ENCODE measurements at regions of chr12 and their contacts with region 1.

Region 1: DNA sequence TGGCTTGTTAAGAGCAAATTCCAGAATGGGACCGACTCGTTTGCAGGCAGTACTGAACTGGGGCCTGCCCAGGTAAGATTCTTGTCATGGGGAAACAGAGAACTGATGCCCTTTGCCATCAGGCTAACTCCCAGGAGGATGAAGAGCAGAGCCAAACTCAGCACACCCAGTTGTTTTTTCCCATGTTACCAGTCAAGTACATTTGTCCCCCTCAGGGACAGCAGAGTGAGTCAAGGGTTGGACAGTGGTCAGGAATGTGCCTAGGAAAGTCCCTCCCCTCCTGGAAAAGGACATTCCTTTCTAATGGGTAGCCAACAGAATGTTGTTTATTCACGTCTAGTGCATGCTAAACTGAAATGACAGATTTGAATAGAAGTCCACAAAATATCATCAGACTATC is 1.6 kb downstream of the ART4 start:
- DNase-seq: no peak

Region 2: GRCh38 chr12:14913381-14913781 is 71.6 kb after region 1 on chr12:
- intact Hi-C with region 1: no loop called
- DNase-seq: no peak

Region 3: GRCh38 chr12:14995583-14996425 is 154.0 kb after region 1 on chr12:
- intact Hi-C with region 1: loop called (anchors 5 kb)
- DNase-seq: no peak

Measured in head of caudate nucleus (tissue), 42 donors.